ENCODE measurements at regions of chr18 and their contacts with region 1.

Region 1: GRCh38 chr18:61489334-61489733 is 156.1 kb downstream of the CDH20 start:
- DNase-seq: no peak
- H3K4me3 ChIP-seq: no peak overlapping the region
- H3K27ac ChIP-seq: no peak overlapping the region
- H3K4me1 ChIP-seq: no peaks in the 10 kb centered on the region
- H3K27me3 ChIP-seq: no peaks in the 10 kb centered on the region
- CTCF ChIP-seq: no peak
- POLR2A ChIP-seq: no peak

Region 2: GRCh38 chr18:61471942-61472341 is 17.4 kb before region 1 on chr18:
- intact Hi-C with region 1: loop called (anchors 1 kb)
- DNase-seq: no peak
- H3K4me3 ChIP-seq: no peak overlapping the region
- H3K27ac ChIP-seq: no peak overlapping the region
- H3K4me1 ChIP-seq: no peaks in the 10 kb centered on the region
- H3K27me3 ChIP-seq: peaks cover 0 to 5% of the 10 kb centered on the region in 2 donors
- CTCF ChIP-seq: no peak
- POLR2A ChIP-seq: no peak

Measured in breast epithelium (tissue), 4 donors.